ENCODE measurements at regions of chr16 and their contacts with region 1.

Region 1: DNA sequence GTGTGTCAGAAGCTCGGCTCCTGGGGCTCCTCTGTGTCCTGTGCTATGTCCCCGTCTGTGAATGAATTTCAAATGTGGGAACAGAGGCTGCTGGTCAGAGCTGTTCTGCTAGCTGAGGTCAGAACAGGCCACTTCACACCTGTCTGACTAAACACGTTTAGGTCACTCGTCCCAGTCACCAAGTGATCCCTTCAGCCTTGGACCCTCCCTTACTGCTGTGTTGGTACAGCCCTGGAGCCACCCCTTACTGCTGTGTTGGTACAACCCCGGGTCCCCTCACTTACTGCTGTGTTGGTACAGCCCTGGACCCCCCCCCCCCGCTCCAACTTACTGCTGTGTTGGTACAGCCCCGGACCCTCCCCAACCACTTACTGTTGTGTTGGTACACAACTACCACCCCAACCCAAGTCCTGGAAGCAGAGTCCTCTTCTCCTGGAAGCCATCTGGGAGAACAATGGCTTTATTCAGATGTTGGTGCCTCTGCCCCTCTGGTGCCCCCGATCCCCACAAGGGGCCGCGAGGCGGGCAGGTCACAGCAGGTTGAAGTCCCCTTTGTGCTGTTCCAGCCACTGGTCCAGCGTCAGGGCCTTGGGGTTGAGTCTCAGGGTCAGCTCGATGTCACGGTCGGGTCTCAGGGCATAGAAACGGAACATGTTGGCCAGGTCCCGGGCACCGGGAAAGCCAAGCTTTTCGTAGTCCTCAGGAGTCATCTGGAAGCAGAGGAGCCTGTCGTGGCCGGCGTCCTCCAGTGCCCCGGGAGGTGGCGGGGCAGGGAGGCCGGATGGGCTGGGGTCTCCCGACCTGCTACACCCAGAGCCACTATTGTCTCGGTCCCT is 13.0 kb downstream of the NMRAL1 start:
- DNase-seq: no peak
- H3K4me3 ChIP-seq: no peak overlapping the region
- H3K27ac ChIP-seq: no peak overlapping the region
- H3K4me1 ChIP-seq: peaks cover 21% of the 10 kb centered on the region
- H3K27me3 ChIP-seq: no peaks in the 10 kb centered on the region
- CTCF ChIP-seq: no peak

Region 2: GRCh38 chr16:4392382-4393239 is 68.9 kb before region 1 on chr16:
- CTCF ChIA-PET with region 1: no interaction called
- dilution Hi-C with region 1: loop called (anchors 5 kb)
- in situ Hi-C with region 1: no loop called
- intact Hi-C with region 1: no loop called
- DNase-seq: peak; percentile 62
- H3K4me3 ChIP-seq: no peak overlapping the region
- H3K27ac ChIP-seq: peak overlapping the region; percentile 74
- H3K4me1 ChIP-seq: peaks cover 24% of the 10 kb centered on the region
- H3K27me3 ChIP-seq: no peaks in the 10 kb centered on the region
- CTCF ChIP-seq: no peak

Region 3: GRCh38 chr16:4425378-4426020 is 36.0 kb before region 1 on chr16 and contains the start of gene DNAJA3:
- CTCF ChIA-PET with region 1: no interaction called
- dilution Hi-C with region 1: loop called (anchors 5 kb)
- in situ Hi-C with region 1: no loop called
- intact Hi-C with region 1: loop called (anchors 2 kb)
- DNase-seq: peak; percentile 92
- H3K4me3 ChIP-seq: peak within 1 kb of the TSS; percentile 70 to 78 (median 75)
- H3K27ac ChIP-seq: peak within 1 kb of the TSS; percentile 91
- H3K4me1 ChIP-seq: peaks cover 13% of the 10 kb centered on the region
- H3K27me3 ChIP-seq: no peaks in the 10 kb centered on the region
- CTCF ChIP-seq: no peak
- total RNA-seq, gene DNAJA3: 52.7 to 70.4 TPM

Region 4: DNA sequence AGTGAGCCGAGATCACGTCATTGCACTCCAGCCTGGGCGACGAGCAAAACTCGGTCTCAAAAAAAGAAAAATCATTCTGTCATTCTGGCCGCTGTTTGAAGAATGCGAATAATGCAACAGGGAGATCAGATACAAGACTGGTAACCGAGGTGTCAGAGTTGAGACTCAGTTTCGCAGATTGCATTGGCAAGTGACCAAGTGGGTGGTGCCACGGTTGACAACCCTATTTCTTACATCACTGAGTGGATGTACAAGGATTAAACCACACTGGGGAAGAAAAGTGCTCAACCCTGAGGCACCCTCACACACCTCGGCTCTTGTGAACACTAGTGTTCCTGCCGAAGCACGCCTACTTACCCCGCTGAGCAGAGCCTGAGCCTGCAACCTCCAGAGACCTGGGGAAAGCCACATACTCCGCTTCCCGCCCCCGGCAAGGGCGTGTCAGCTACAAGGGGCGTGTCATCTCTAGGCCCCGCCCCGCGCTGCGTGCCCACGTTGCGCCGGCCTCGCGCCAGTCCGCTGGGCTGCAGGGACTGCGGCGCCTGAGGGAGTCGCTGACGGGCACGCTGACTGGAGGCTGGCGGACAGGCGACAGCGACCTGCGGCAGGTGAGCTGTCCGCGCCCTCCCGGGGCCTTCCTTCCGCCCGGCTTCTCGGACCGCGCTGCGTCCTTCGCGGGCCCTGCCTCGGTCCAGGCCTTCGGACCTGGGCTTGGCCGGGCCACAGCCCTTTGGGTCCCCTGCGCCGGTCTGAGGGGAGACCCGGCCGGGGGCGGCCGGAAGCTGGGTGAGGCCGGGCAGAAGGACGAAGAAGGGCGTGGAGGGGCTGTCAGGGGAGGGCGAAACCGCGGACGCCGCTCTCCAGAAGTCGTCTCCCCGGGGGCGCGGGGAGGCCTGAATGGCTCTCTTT is 14.7 kb after region 1 on chr16 and contains the start of gene HMOX2:
- CTCF ChIA-PET with region 1: no interaction called
- dilution Hi-C with region 1: no loop called
- in situ Hi-C with region 1: no loop called
- intact Hi-C with region 1: loop called (anchors 1 kb)
- DNase-seq: peak; percentile 93
- H3K4me3 ChIP-seq: peak within 1 kb of the TSS; percentile 72 to 86 (median 78)
- H3K27ac ChIP-seq: peak within 1 kb of the TSS; percentile 69
- H3K4me1 ChIP-seq: peaks cover 18% of the 10 kb centered on the region
- H3K27me3 ChIP-seq: no peaks in the 10 kb centered on the region
- CTCF ChIP-seq: peak; percentile 21 to 52
- total RNA-seq, gene HMOX2: 55.8 to 98.4 TPM

Region 5: DNA sequence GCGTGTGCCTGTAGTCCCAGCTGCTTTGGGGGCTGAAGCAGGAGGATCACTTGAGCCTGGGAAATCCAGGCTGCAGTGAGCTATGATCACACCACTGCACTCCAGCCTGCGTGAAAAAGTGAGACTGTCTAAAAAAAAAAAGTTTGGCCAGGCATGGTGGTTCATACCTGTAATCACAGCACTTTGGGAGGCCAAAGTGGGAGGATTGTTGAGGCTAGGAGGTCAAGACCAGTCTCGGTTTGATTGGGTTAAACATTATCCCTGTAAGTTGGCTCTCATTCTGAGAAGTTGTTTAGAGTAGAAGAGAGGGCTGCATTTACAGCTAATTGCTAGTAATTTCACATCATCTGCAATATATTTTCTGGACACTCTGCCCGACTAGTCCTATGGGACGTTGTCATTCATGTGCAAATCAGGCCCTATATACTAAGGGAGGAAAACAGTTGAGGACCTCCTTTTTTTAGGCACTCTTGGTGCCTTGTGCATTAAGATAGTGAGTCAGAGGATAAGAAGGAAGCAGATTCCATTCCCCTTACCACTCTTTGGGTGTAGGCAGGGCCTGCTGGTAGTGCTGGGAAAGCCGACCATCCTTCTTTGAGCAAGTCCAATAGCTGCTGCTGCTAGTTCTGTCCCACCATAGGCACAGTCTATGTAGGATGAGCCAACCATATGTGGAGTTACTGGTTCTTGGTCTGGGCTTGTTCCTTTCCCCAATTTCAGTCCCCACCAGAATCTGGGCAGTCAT is 33.5 kb after region 1 on chr16:
- CTCF ChIA-PET with region 1: no interaction called
- dilution Hi-C with region 1: loop called (anchors 5 kb)
- in situ Hi-C with region 1: no loop called
- intact Hi-C with region 1: loop called (anchors 1 kb)
- DNase-seq: peak; percentile 78
- H3K4me3 ChIP-seq: no peak overlapping the region
- H3K27ac ChIP-seq: peak overlapping the region; percentile 72
- H3K4me1 ChIP-seq: peaks cover 53% of the 10 kb centered on the region
- H3K27me3 ChIP-seq: no peaks in the 10 kb centered on the region
- CTCF ChIP-seq: no peak

Region 6: GRCh38 chr16:4500272-4500671 is 38.8 kb after region 1 on chr16:
- CTCF ChIA-PET with region 1: no interaction called
- dilution Hi-C with region 1: loop called (anchors 5 kb)
- in situ Hi-C with region 1: no loop called
- intact Hi-C with region 1: loop called (anchors 1 kb)
- DNase-seq: peak; percentile 74
- H3K4me3 ChIP-seq: no peak overlapping the region
- H3K27ac ChIP-seq: peak overlapping the region; percentile 13
- H3K4me1 ChIP-seq: peaks cover 64% of the 10 kb centered on the region
- H3K27me3 ChIP-seq: no peaks in the 10 kb centered on the region
- CTCF ChIP-seq: no peak

Measured in mammary epithelial cell (primary cell).